Left lung (tissue), 14 donors: ENCODE measurements at regions of chr18 and their contacts with region 1.

Region 1: GRCh38 chr18:49561289-49562193 is at the start of gene LIPG:
- DNase-seq: peak in 3 of 4 donors; percentile 56 to 78 (median 60)
- ATAC-seq: peak; percentile 82
- H3K4me3 ChIP-seq: peak within 1 kb of the TSS; percentile 31 to 42
- H3K27ac ChIP-seq: no peak within 1 kb of the TSS
- H3K4me1 ChIP-seq: peaks cover 0 to 27% of the 10 kb centered on the region in 2 donors
- H3K27me3 ChIP-seq: peaks cover 7 to 64% of the 10 kb centered on the region in 2 donors
- CTCF ChIP-seq: no peak
- polyA plus RNA-seq, gene LIPG: 8.8 to 19.8 (median 11.8) TPM

Region 2: GRCh38 chr18:49858309-49859020 is 296.9 kb after region 1 on chr18:
- intact Hi-C with region 1: loop called in 1 of 2 experiments (anchors 10 kb)
- DNase-seq: peak in 3 of 4 donors; percentile 55 to 84 (median 58)
- ATAC-seq: peak; percentile 89
- H3K4me3 ChIP-seq: no peak overlapping the region
- H3K27ac ChIP-seq: peak overlapping the region; percentile 43 to 68
- H3K4me1 ChIP-seq: peaks cover 0 to 8% of the 10 kb centered on the region in 2 donors
- H3K27me3 ChIP-seq: no peaks in the 10 kb centered on the region
- CTCF ChIP-seq: peak; percentile 76 to 94